Natural killer cell (primary cell): ENCODE measurements at regions of chr15 and their contacts with region 1.

Region 1: DNA sequence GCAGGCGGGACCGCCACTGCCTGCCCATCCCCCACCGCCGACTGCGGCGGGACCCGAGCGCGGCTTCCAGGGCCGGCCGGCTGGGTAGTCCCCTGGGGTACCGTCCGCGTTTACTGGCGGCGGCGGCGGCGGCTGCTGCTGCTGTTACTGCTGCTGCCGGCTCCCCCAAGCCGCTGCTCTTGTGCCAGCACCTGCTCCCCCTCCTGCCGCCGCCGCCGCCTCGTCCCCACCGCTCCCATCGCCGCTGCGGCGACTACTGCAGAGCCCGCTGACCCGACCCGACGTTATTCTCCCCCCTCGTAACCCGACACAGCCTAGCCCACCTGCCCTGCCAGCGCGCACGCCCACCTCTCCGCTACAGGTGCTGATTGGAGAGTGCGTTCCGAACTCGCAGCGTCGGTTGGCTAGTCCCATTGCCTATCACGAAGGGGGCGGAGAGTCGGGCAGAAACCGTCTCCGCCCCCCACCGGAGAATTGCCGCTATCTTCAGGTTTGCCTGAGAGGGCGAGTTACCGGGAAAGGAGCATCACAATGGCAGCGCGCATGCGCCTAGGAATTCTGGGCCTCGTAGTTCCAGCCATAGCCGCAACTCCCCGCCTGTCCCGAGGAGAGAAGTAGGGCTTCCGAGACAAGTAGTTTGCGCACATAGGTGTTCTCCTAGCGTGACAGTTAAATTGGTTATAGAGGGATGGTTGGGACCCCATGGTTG is at the start of gene TTBK2:
- DNase-seq: peak; percentile 94 to 100
- ATAC-seq: peak; percentile 95 to 98 (median 96)
- H3K4me3 ChIP-seq: peak within 1 kb of the TSS; percentile 50
- H3K4me3 Mint-ChIP-seq: peak within 1 kb of the TSS; percentile 97
- H3K27ac ChIP-seq: peak within 1 kb of the TSS; percentile 48
- H3K27ac Mint-ChIP-seq: peak within 1 kb of the TSS; percentile 89 to 91
- H3K4me1 ChIP-seq: peaks cover 11% of the 10 kb centered on the region
- H3K4me1 Mint-ChIP-seq: peaks cover 26 to 28% of the 10 kb centered on the region in 2 donors
- H3K27me3 ChIP-seq: no peaks in the 10 kb centered on the region
- H3K27me3 Mint-ChIP-seq: peaks cover 0 to 2% of the 10 kb centered on the region in 2 donors
- CTCF ChIP-seq: no peak
- total RNA-seq, gene TTBK2: 17.5 to 25.9 (median 25.7) TPM

Region 2: DNA sequence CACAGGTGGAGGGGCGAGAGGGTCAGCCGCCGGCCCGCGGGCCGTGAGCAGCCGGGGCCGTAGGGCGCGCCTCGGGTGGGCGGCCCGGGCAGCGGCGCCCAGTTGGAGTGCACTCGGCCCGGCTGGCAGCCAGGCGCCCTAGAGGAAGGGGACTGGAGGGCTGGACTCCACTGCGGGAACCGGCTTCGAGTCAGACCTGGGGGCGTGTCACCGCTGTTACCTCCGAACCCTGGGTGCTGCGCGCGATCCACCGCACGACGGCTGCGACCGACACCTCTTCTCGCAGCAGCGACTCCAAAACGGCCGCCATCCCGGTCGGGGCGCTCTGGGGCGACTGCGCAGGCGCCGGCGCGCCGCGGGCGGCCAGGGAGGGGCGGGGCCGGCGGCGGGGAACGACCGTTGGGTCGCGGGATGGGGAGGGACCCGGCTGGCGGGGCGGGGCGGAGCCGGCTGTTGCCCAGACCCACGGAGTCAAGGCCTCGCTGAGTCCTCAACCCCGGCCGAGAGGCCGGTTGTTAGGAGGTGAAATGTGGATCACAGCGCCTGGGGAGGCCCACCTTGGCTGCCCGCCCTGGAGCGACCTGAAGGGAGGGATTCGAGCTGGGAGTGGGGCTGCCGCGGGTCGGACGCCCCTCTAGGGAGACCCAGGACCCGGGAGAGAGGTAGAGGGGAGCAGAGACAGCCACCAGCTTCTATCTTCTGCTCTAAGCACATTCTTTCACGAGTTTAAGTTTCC is 183.7 kb before region 1 on chr15 and contains the start of gene CDAN1:
- intact Hi-C with region 1: loop called (anchors 10 kb)
- DNase-seq: peak; percentile 90 to 94
- ATAC-seq: peak; percentile 93 to 94 (median 94)
- H3K4me3 ChIP-seq: peak within 1 kb of the TSS; percentile 69
- H3K4me3 Mint-ChIP-seq: peak within 1 kb of the TSS; percentile 84
- H3K27ac ChIP-seq: peak within 1 kb of the TSS; percentile 89
- H3K27ac Mint-ChIP-seq: peak within 1 kb of the TSS; percentile 78 to 80
- H3K4me1 ChIP-seq: peaks cover 15% of the 10 kb centered on the region
- H3K4me1 Mint-ChIP-seq: peaks cover 6 to 18% of the 10 kb centered on the region in 2 donors
- H3K27me3 ChIP-seq: no peaks in the 10 kb centered on the region
- H3K27me3 Mint-ChIP-seq: no peaks in the 10 kb centered on the region
- CTCF ChIP-seq: no peak
- total RNA-seq, gene CDAN1: 18.1 to 36.9 (median 34.9) TPM